K562 (cell line): ENCODE measurements at regions of chr22 and their contacts with region 1.

Region 1: DNA sequence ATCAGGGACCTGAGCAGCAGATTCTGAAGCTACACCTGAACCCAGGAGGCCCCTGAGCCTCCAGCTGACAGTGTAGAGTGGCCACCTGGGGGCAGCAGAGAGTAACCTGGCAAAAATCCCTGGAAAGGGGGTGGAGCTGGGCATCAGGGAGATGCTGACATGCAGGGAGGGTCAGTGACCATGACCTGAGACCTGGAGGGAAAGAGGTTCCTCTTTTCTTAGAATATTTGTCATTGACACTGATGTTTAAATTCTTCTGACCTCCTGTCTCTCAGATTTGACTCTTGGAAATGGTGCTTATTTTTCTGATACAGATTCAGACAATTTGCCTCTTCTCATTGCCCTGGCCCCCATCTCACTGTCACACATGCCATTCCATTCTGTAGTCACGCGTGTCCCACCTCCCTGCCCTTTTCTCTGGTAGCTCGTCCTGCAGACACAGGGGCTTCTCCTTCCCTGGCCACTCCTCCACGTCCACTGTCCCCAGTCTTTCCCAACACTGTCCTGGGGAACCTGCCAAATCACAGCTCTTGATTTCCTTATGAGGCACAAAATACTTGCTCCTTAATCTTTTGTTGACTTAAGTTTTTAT is 117.2 kb upstream of the IGLL5 start:
- DNase-seq: peak; percentile 96 to 100 (median 98)
- ATAC-seq: peak; percentile 94
- H3K4me3 ChIP-seq: no peak overlapping the region
- H3K27ac ChIP-seq: no peak overlapping the region
- H3K4me1 ChIP-seq: no peaks in the 10 kb centered on the region
- H3K27me3 ChIP-seq: peaks cover 0 to 32% of the 10 kb centered on the region in 2 experiments; a peak in 2 of 5 replicates
- CTCF ChIP-seq: peak in 1 of 3 experiments; percentile 100; a peak in 2 of 6 replicates
- EP300 ChIP-seq: peak; percentile 71
- POLR2A ChIP-seq: no peak
- RAD21 ChIP-seq: no peak

Region 2: DNA sequence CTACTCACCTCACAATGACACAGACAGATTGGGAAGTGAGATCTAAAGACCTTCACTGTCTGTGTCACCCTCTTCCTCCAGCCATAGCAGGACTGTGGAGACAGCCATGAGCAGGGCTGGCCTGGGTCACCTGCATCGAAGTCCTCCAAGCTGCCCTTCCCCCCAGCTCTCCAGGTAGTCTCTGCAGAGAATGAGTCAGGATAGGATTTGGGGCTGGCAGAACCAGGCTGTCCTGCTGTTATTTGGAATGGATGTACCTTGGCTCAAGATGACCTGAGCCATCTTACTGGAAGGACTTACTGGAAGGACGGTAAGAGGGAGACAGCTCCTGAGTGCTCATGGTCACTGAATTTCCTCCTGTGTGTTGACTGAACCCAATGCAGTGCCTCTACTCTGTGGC is 96.7 kb before region 1 on chr22:
- CTCF ChIA-PET with region 1: no interaction called
- POLR2A ChIA-PET with region 1: no interaction called
- in situ Hi-C with region 1: no loop called
- intact Hi-C with region 1: no loop called
- DNase-seq: no peak
- ATAC-seq: peak; percentile 23
- H3K4me3 ChIP-seq: no peak overlapping the region
- H3K27ac ChIP-seq: no peak overlapping the region
- H3K4me1 ChIP-seq: no peaks in the 10 kb centered on the region
- H3K27me3 ChIP-seq: peaks cover 33 to 41% of the 10 kb centered on the region in 2 experiments
- CTCF ChIP-seq: no peak
- EP300 ChIP-seq: no peak
- POLR2A ChIP-seq: no peak
- RAD21 ChIP-seq: no peak

Region 3: DNA sequence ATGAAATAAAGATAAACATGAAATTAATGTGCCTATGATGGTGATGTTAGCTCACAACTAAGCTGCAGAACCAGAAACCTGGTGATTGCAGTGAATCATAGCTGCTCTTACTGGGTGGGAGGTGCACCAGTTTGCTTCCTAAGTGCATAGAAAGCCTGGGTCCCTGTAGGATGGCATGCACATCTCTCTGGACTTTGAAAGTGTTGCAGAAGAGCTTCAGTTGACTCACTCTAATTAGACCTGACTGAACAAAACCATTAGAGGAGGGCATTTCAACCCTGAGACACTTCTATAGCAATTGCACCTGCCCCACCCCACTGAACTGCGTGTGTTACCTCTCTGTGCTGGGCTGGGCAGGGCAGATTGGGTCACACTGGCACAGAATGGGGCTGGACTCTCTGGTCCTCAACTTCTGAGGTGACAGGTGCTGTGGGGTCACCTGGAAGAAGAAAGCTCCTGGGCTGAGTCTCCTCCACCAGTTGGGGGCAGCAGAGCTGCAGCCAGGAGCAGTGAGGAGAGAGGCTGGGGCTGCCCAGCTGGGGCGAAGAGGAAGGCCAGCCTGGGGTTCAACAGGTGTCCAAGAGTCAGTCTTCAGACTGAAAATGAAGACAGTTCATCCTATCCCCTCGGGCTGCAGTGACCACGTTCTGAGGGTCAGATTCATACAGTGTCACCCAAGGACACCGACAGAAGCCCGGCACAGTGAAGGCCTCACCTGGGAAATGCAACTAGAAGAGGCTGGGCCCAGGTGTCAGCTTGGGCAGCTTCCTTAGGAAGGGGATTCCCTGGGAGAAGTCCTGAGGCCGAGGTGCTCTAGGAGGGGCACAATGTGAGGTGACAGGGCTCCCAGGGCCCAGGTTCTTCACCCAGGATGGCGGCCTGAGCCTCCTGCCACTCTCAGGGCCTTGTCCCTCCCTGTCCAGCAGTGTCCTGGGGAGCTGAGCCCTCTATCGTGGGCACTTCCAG is 67.9 kb before region 1 on chr22:
- CTCF ChIA-PET with region 1: no interaction called
- POLR2A ChIA-PET with region 1: interaction called, 38 read pairs
- in situ Hi-C with region 1: loop called (anchors 5 kb)
- intact Hi-C with region 1: no loop called
- DNase-seq: peak in 1 of 4 experiments; percentile 83
- ATAC-seq: peak; percentile 86
- H3K4me3 ChIP-seq: no peak overlapping the region
- H3K27ac ChIP-seq: no peak overlapping the region
- H3K4me1 ChIP-seq: no peaks in the 10 kb centered on the region
- H3K27me3 ChIP-seq: peaks cover 0 to 36% of the 10 kb centered on the region in 2 experiments; a peak in 2 of 5 replicates
- CTCF ChIP-seq: peak in 1 of 3 experiments; percentile 93; a peak in 2 of 6 replicates
- EP300 ChIP-seq: no peak
- POLR2A ChIP-seq: no peak
- RAD21 ChIP-seq: peak in 1 of 2 experiments; percentile 91; a peak in 2 of 4 replicates

Region 4: DNA sequence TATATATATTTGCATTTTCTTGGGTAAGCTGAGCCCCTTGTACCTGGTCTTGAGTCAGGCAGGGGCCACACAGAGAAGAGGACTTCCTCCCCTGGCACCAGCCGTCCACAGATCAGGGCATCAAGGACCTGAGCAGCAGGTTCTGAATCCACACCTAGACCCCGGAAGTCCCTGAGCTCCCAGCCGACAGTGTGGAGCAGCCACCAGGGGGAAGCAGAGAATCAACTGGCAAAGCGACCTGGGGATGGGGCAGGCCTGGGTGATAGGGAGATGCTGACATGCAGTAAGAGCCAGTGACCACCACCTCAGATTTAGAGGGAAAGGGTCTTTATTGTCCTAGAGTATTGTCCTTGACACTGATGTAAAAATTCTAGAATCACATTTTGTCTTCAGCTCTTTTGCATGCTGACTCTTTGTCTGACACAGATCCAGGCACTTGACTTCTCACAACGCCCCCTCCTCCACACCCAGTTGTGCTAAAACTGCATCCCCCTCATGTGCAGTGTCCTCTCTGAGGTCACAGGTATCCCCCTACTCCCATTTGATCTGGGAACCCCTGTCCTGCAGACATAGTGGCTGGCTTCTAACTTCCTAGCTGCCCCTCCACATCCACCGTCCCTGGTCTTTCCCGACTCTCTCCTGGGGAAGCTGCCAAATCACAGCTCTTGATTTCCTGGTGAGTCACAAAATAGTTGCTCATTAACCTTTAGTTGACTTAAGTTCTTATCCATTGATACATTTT is 16.7 kb before region 1 on chr22:
- CTCF ChIA-PET with region 1: interaction called, 6 read pairs
- POLR2A ChIA-PET with region 1: interaction called, 16 read pairs
- in situ Hi-C with region 1: no loop called
- intact Hi-C with region 1: loop called (anchors 1 kb)
- DNase-seq: peak; percentile 96 to 100 (median 100)
- ATAC-seq: peak; percentile 97
- H3K4me3 ChIP-seq: no peak overlapping the region
- H3K27ac ChIP-seq: no peak overlapping the region
- H3K4me1 ChIP-seq: no peaks in the 10 kb centered on the region
- H3K27me3 ChIP-seq: peaks cover 2 to 20% of the 10 kb centered on the region in 2 experiments; a peak in 3 of 5 replicates
- CTCF ChIP-seq: peak in 1 of 3 experiments; percentile 100; a peak in 2 of 6 replicates
- EP300 ChIP-seq: no peak; the same call in 1 of the 2 replicates
- POLR2A ChIP-seq: no peak
- RAD21 ChIP-seq: peak in 1 of 2 experiments; percentile 98; a peak in 2 of 4 replicates

Region 5: DNA sequence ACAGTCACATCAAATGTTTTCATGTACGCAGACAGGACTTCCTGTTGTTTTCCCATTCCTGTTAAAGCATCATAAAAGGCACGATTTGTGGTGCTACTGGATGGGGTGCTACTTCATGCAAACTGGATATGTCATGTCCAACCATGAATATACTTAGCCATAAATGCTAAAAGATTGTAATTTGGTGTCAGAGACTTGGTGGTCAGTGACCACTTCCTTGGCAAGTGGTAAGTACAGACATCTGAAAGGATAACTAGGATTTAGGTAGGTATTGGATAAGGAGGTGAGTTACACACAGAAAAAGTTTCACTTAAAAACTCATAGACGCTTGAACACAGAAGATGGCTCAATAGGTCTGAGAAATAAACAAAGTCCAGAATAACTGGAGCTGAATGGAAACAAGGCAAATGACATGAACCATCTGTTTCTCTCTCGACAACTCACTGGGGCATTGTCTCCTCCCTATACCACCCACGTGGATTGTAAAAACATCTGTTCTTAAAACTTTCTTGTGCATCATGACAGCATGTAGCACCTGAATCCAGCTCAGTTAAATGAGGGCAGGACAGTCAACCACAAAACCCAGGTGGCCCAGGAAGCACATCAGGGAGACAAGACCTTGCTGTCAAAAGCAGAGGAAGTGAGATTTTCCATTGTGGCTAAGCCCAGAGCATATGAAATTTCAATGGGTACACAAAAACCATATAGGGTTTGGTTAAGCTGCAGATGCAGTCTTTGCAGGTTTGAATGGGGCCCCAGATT is 95.1 kb after region 1 on chr22:
- CTCF ChIA-PET with region 1: no interaction called
- POLR2A ChIA-PET with region 1: no interaction called
- in situ Hi-C with region 1: no loop called
- intact Hi-C with region 1: no loop called
- DNase-seq: peak in 2 of 4 experiments; percentile 42 to 52
- ATAC-seq: no peak
- H3K4me3 ChIP-seq: no peak overlapping the region
- H3K27ac ChIP-seq: no peak overlapping the region
- H3K4me1 ChIP-seq: no peaks in the 10 kb centered on the region
- H3K27me3 ChIP-seq: peaks cover 0 to 20% of the 10 kb centered on the region in 2 experiments; a peak in 3 of 5 replicates
- CTCF ChIP-seq: no peak
- EP300 ChIP-seq: no peak
- POLR2A ChIP-seq: no peak
- RAD21 ChIP-seq: no peak